Naive thymus-derived CD8-positive, alpha-beta T cell (primary cell): ENCODE measurements at regions of chr4 and their contacts with region 1.

Region 1: DNA sequence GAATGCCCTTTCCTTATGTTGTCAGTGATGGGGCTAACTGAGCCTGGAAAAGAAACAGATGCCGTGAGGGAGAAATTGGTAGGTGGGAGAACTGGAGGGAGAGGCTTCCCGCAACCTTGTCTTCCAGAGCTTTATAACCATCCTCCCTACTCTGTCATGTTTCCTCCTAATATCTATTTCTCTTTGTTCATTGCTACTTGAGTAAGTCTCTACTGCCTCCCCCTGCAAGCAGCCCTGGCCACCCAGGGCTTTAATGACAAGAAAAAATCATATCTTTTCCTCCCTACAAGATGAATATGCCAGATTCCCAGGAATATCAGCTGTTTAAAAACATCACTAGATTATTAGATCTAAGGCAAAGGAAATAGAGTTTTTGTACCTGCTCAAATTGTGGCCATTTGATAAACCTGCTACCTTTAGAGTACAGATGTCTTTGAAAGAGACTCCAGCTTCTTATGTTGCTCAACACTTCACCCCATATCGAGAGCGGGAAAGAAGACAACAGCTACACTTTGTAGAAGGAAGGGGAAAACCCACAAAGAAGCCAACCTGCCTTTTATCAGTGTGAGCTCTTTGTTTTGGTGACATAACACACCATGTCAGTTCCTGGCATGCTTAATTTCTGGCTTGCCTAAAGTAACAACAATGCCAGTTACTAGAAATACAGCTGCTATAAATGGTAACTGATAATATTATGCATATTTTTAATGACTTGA is 186.6 kb upstream of the LEF1 start:
- DNase-seq: peak in 9 of 10 donors; percentile 17 to 88 (median 61)
- ATAC-seq: peak; percentile 90 to 92
- H3K4me3 Mint-ChIP-seq: peak overlapping the region; percentile 27 to 80 (median 65)
- H3K27ac Mint-ChIP-seq: peak overlapping the region; percentile 87 to 99 (median 91)
- H3K4me1 Mint-ChIP-seq: peaks cover 33 to 77% (median 67%) of the 10 kb centered on the region in 4 donors
- H3K27me3 Mint-ChIP-seq: no peaks in the 10 kb centered on the region

Region 2: GRCh38 chr4:108320061-108320460 is 35.3 kb before region 1 on chr4:
- POLR2A ChIA-PET with region 1: no interaction called
- DNase-seq: no peak
- ATAC-seq: no peak
- H3K4me3 Mint-ChIP-seq: no peak overlapping the region
- H3K27ac Mint-ChIP-seq: peak overlapping the region in 1 of 10 donors; percentile 35
- H3K4me1 Mint-ChIP-seq: peaks cover 12 to 21% (median 16%) of the 10 kb centered on the region in 4 donors
- H3K27me3 Mint-ChIP-seq: no peaks in the 10 kb centered on the region

Region 3: DNA sequence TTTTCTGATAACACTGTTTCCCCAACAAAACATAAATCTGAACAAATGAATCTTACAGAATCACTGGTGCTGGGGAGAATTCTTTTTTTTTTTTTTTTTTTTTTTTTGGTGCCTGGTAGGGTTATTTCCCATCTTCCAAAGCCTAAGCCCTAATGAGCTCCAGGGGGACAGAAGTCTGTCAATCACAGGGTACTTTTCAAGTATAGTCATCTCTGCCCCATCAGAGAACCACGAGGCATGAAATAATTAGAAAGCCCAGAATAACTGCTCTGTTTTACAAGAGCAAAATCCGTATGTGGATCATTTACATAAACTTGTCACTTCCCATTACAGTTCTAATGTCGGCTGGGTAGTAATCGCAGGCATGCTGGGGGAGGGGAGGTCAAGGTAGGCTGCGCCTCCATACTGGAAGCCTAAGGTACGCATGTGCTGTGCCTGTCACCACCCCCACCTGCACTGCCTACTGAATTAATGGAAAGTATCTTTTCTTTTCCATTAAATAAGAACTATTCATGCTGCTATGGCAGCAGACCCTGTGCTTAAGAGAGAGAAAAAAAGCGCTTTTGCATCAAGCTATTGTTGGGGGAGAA is 21.9 kb before region 1 on chr4:
- POLR2A ChIA-PET with region 1: interaction called, 10 read pairs
- DNase-seq: no peak
- ATAC-seq: no peak
- H3K4me3 Mint-ChIP-seq: no peak overlapping the region
- H3K27ac Mint-ChIP-seq: no peak overlapping the region
- H3K4me1 Mint-ChIP-seq: peaks cover 7 to 18% (median 11%) of the 10 kb centered on the region in 4 donors
- H3K27me3 Mint-ChIP-seq: no peaks in the 10 kb centered on the region

Region 4: DNA sequence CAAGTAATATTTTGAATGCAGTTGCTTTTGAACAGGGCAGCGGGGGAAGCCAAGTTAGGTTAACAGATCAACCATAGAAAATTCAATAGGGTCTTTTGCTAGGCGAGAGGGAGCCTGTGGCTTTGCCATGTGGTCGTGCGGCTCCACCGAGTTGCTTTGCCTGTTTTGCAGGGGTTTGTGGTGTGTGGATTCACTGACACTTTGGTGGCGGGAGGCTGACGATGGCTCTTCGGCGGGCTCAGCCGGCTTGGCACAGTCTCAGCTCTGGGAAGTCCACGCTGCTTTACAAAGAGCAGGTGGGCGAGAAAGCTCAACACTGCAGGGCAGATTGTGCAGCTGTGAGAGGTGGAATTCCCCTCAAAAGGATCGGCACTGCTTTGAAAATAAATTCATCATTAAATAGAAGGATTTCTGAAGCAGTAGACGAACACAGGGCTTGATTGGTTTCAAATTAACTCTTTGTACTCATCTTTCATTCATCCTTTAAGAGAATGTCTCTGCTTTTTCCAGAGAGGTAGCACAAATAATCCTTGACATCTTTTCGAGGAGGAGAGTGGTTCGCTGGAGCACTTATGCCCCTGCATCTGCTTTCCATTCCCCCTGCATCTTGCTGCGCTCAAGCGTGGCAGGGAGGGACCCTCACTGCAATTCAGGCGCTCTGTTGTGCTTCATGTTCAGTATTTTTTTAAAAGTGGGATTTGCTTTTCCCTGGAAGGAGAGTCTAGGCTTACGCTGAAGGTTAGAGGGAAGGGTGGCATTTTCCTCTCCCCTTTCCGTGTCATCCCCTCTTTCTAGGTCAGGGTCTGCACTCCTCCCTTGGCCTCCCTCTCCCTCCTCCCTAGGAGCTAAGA is 15.2 kb after region 1 on chr4:
- POLR2A ChIA-PET with region 1: interaction called, 18 read pairs
- DNase-seq: peak; percentile 16 to 65 (median 44)
- ATAC-seq: peak; percentile 85 to 87
- H3K4me3 Mint-ChIP-seq: peak overlapping the region; percentile 84 to 96 (median 92)
- H3K27ac Mint-ChIP-seq: peak overlapping the region; percentile 85 to 97 (median 92)
- H3K4me1 Mint-ChIP-seq: peaks cover 32 to 65% (median 44%) of the 10 kb centered on the region in 4 donors
- H3K27me3 Mint-ChIP-seq: peaks cover 0 to 3% (median 0%) of the 10 kb centered on the region in 5 donors

Region 5: DNA sequence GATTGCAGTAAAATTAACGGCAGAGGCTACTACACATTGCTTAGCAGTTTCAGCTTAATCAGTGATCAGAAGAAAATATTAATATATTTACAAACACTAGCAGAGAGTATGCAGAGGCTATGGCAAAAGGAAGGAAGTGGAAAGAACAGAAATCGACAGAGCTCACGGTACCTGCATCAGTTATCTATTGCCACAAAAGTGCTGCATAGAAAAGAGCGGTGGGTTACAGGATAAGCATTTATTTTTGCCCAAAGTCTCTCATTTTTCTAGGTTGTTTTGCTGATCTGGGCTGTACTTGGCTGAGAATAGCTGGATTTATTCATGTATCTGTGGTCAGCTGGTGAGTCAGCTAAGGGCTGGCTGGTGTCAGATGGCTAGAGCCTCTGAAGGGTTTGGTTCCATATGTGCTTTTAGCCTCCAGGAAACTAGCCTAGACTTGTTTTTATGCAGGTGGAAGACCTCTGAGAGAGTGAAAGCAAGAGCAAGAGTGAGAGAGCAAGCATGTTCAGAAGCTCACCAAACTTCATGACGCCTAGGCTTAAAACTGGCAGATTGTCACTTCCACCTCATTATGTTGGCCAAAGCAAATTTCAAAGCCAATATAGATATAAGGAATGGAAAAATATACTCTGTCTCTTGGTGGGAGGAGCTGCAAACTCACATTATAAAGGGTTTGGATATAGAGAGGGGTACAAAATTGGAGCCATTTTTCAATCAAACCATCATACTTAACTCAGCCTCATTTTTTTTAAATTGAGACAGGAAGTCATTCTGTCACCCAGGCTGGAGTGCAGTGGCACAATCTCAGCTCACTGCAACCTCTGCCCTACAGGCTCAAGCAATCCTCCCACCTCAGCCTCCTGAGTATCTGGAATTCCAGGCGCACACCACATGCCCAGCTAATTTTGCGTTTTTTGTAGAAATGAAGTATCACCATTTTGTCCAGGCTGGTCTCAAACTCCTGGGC is 111.9 kb after region 1 on chr4:
- POLR2A ChIA-PET with region 1: interaction called, 16 read pairs
- DNase-seq: peak in 7 of 10 donors; percentile 13 to 70 (median 41)
- ATAC-seq: peak; percentile 85
- H3K4me3 Mint-ChIP-seq: peak overlapping the region; percentile 66 to 92 (median 79)
- H3K27ac Mint-ChIP-seq: peak overlapping the region; percentile 46 to 99 (median 95)
- H3K4me1 Mint-ChIP-seq: peaks cover 26 to 55% (median 40%) of the 10 kb centered on the region in 4 donors
- H3K27me3 Mint-ChIP-seq: no peaks in the 10 kb centered on the region

Region 6: DNA sequence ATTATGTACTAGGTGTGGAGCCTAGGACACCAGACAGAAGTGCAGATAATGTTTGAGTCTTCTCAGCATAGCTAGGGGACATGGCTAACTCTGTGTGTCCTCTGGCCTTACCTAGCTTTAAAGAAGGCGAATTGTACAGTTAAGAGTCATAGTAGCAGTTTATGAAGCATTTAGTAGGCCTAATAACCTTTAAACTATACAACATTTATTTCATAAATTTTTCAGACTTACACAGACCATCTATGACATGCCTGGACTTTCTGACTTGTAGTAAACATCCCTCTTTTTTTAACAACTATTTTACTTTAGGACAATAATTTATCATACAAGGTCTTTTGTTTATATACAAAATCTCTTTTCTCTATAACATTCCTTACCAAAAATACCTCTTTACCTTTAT is 370.1 kb after region 1 on chr4:
- POLR2A ChIA-PET with region 1: no interaction called
- DNase-seq: no peak
- ATAC-seq: no peak
- H3K4me3 Mint-ChIP-seq: no peak overlapping the region
- H3K27ac Mint-ChIP-seq: no peak overlapping the region
- H3K4me1 Mint-ChIP-seq: no peaks in the 10 kb centered on the region
- H3K27me3 Mint-ChIP-seq: peaks cover 0 to 3% (median 0%) of the 10 kb centered on the region in 5 donors